ENCODE measurements at regions of chr9 and their contacts with region 1.

Region 1: DNA sequence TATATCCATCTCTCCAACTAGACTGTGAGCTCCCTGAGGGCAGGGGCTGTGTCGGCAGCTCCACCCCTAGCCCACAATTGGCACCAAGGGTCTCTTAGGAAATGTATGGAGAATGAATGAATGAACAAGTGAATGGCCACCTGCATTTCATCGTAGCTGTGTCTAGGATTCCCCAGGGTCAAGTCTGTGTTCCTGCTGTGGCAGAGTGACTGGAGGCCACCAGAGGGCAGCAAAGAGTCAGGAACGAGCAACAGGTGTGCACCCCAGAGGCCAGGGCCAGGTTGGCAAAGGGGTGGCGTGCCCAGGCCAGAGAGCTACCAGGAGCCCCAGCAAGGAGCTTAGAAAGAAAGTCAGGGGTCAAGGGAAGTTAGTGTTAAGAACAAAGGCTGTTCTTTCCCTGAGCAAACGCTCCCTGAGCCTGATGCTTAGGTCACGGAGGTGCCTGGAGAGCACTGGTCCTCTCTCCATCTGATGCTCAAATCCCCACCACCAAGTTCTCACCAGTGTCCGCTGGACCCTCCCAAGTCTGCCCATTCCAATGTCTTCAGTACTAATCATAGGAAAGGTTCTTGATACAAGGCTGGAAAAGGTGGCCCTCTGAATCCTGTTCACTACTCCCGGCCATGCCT is 160.7 kb downstream of the PAX5 start:
- DNase-seq: peak; percentile 47 to 76 (median 61)
- H3K4me3 ChIP-seq: no peak overlapping the region
- H3K4me3 Mint-ChIP-seq: no peak overlapping the region
- H3K27ac ChIP-seq: no peak overlapping the region
- H3K27ac Mint-ChIP-seq: no peak overlapping the region
- H3K4me1 ChIP-seq: no peaks in the 10 kb centered on the region
- H3K4me1 Mint-ChIP-seq: peaks cover 0 to 3% (median 0%) of the 10 kb centered on the region in 3 donors
- H3K27me3 ChIP-seq: no peaks in the 10 kb centered on the region
- H3K27me3 Mint-ChIP-seq: peaks cover 4 to 7% of the 10 kb centered on the region in 2 donors

Region 2: GRCh38 chr9:36632892-36633291 is 240.5 kb before region 1 on chr9:
- CTCF ChIA-PET with region 1: no interaction called
- POLR2A ChIA-PET with region 1: no interaction called
- DNase-seq: no peak
- H3K4me3 ChIP-seq: no peak overlapping the region
- H3K4me3 Mint-ChIP-seq: no peak overlapping the region
- H3K27ac ChIP-seq: no peak overlapping the region
- H3K27ac Mint-ChIP-seq: no peak overlapping the region
- H3K4me1 ChIP-seq: no peaks in the 10 kb centered on the region
- H3K4me1 Mint-ChIP-seq: no peaks in the 10 kb centered on the region
- H3K27me3 ChIP-seq: no peaks in the 10 kb centered on the region
- H3K27me3 Mint-ChIP-seq: no peaks in the 10 kb centered on the region

Region 3: GRCh38 chr9:36862206-36863145 is 10.9 kb before region 1 on chr9:
- CTCF ChIA-PET with region 1: interaction called, 11 read pairs
- POLR2A ChIA-PET with region 1: no interaction called
- DNase-seq: no peak
- H3K4me3 ChIP-seq: no peak overlapping the region
- H3K4me3 Mint-ChIP-seq: no peak overlapping the region
- H3K27ac ChIP-seq: no peak overlapping the region
- H3K27ac Mint-ChIP-seq: no peak overlapping the region
- H3K4me1 ChIP-seq: no peaks in the 10 kb centered on the region
- H3K4me1 Mint-ChIP-seq: no peaks in the 10 kb centered on the region
- H3K27me3 ChIP-seq: no peaks in the 10 kb centered on the region
- H3K27me3 Mint-ChIP-seq: peaks cover 7 to 19% of the 10 kb centered on the region in 2 donors

Region 4: DNA sequence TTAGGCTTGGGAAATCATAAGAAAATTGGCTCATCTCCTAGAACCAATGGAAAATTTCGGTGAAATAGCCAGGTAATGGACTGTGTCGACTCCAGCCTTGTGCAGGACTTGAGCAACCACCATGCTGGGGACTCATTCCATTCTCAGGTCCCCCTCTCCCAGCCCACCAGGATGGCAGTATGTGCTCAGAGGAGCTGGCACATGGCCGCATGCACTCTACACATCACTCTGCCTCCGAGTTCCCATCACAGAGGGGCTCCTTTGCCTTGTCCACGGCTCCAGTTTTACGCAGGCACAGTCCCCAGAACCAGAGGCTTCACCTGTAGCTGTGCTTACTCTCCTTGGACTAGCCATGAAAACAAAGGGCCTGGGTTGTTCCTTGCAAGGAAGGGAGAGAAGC is 11.4 kb after region 1 on chr9:
- CTCF ChIA-PET with region 1: interaction called, 11 read pairs
- POLR2A ChIA-PET with region 1: no interaction called
- DNase-seq: no peak
- H3K4me3 ChIP-seq: no peak overlapping the region
- H3K4me3 Mint-ChIP-seq: no peak overlapping the region
- H3K27ac ChIP-seq: no peak overlapping the region
- H3K27ac Mint-ChIP-seq: no peak overlapping the region
- H3K4me1 ChIP-seq: no peaks in the 10 kb centered on the region
- H3K4me1 Mint-ChIP-seq: no peaks in the 10 kb centered on the region
- H3K27me3 ChIP-seq: no peaks in the 10 kb centered on the region
- H3K27me3 Mint-ChIP-seq: peaks cover 8 to 23% of the 10 kb centered on the region in 2 donors

Region 5: GRCh38 chr9:37329576-37329975 is 456.2 kb after region 1 on chr9:
- CTCF ChIA-PET with region 1: interaction called, 12 read pairs
- POLR2A ChIA-PET with region 1: no interaction called
- DNase-seq: no peak
- H3K4me3 ChIP-seq: no peak overlapping the region
- H3K4me3 Mint-ChIP-seq: no peak overlapping the region
- H3K27ac ChIP-seq: no peak overlapping the region
- H3K27ac Mint-ChIP-seq: no peak overlapping the region
- H3K4me1 ChIP-seq: no peaks in the 10 kb centered on the region
- H3K4me1 Mint-ChIP-seq: no peaks in the 10 kb centered on the region
- H3K27me3 ChIP-seq: no peaks in the 10 kb centered on the region
- H3K27me3 Mint-ChIP-seq: no peaks in the 10 kb centered on the region